Motor neuron (in vitro differentiated cells): ENCODE measurements at regions of chr11 and their contacts with region 1.

Region 1: GRCh38 chr11:58788355-58789023 is 56.0 kb downstream of the GLYATL2 start:
- ATAC-seq: peak; percentile 57 to 98 (median 90)
- H3K4me3 ChIP-seq: no peak overlapping the region
- H3K27ac ChIP-seq: no peak overlapping the region
- H3K4me1 ChIP-seq: no peaks in the 10 kb centered on the region

Region 2: GRCh38 chr11:58567889-58568512 is 220.5 kb before region 1 on chr11:
- in situ Hi-C with region 1: loop called in 1 of 9 experiments (anchors 25 kb)
- ATAC-seq: peak in 4 of 8 experiments; percentile 64 to 90 (median 81)
- H3K4me3 ChIP-seq: no peak overlapping the region
- H3K27ac ChIP-seq: no peak overlapping the region
- H3K4me1 ChIP-seq: no peaks in the 10 kb centered on the region

Region 3: DNA sequence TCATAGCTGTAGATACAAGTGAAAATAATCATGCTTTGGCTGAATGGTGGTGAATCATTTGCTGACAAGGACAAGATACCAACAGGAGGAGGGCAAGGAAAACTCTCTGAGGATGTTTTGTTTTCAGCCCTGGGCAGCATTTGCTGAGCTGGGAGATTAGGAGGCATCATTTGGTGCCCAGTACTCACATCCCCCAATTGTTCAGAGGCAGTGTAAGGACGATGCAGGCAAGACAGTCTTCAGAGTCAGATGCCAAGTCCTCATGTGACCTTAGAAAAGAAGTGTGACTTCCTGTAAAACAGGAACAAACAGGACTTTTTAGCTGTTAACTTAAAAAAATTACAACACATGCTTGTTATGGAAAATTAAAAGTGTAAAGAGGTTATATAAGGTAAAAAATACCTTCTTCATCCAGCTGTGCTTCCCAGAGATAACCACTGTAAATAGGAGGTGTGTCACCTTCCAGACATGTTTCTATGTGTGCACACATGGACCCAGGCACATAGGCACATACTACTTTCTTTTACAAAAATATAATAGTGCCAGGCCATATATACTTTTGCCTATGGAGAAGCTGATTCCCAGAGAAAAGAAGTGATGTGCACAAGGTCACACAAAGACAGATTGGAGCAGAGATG is 148.0 kb before region 1 on chr11:
- in situ Hi-C with region 1: no loop called
- ATAC-seq: no peak
- H3K4me3 ChIP-seq: no peak overlapping the region
- H3K27ac ChIP-seq: no peak overlapping the region
- H3K4me1 ChIP-seq: peaks cover 0 to 2% of the 10 kb centered on the region in 2 donors

Region 4: DNA sequence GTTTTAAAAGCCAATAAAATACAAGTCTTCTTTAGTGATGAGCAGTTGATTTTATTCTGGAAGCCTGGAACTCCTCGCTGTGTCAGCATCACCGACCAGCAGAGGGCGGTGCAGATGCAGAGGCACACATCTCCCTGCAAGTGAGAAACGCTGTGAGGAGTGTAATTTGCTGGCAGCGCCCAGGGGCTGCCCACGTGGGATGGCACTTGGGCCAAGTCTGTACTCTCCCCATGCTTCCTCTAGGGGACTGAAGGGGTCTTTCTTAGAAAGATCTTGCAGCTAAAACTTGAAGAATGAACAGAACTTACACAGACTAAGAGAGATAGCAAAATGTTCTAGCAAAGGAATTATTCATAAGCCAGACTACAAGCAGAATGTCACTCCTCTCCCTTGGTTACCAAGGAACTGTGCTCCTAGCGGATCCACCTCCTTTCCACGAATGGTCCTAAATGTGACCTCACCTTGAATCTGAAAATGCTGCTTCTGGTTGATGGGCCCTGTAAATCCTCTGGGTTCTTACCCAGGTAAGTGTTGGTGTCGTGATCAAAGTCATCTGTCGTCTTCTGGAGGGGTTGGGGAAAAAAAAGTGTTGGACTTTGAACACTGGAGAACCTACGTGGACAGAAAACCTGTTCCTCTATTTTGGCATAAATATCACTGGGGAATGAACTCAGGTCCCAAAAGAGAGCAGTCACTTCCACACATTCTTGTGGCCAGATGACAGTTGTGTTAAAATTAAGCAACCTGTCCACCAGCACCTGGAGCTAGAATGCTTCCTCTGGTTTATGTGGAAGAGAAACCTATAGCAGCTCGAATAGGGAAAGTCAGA is 134.2 kb before region 1 on chr11:
- in situ Hi-C with region 1: loop called in 2 of 9 experiments (anchors 10 to 25 kb)
- ATAC-seq: peak; percentile 78 to 100 (median 94)
- H3K4me3 ChIP-seq: no peak overlapping the region
- H3K27ac ChIP-seq: no peak overlapping the region
- H3K4me1 ChIP-seq: no peaks in the 10 kb centered on the region

Region 5: DNA sequence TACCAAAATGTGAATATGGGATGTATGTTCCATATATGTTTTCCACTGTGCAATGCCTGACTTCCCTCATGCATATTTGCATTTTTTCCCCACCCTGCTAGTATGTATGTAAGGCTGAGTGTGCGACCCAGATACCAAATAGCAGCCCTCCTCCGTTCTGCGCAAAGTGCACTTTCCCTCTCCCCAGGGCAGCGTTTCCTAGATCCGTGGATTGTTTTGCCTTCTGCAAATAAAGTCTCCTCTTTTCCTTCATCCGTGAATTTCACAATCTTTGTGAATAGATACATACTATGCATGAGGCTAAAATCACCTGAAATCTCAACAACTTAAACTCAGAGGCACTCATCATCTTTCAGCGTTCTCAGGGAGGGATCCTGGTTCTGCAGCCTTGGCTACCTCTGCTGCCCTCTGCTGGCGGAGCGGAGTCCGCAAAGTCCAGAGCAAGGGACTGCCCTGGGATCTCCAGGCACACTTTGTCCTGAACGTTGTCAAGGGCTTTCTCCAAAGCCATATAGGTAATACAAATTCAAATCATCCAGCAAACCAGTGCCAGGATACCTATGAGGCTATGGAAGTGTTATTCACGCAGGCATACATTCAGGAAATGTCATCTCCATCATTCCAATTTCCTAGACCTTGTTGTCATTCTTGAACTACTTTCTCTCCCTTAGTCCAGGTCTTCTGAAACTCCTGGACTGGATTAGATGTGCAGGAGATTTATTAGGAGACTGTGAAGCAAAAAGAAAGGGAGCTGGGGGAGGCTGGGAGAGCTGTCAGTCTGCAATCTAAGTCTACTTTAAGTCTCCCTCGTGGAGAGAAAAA is 112.9 kb before region 1 on chr11:
- in situ Hi-C with region 1: loop called in 2 of 9 experiments (anchors 25 kb)
- ATAC-seq: peak; percentile 65 to 98 (median 80)
- H3K4me3 ChIP-seq: no peak overlapping the region
- H3K27ac ChIP-seq: no peak overlapping the region
- H3K4me1 ChIP-seq: no peaks in the 10 kb centered on the region